Activated CD4-positive, alpha-beta memory T cell treated with anti-CD3 and anti-CD28 coated beads for 36 hours (primary cell): ENCODE measurements at regions of chr21 and their contacts with region 1.

Region 1: DNA sequence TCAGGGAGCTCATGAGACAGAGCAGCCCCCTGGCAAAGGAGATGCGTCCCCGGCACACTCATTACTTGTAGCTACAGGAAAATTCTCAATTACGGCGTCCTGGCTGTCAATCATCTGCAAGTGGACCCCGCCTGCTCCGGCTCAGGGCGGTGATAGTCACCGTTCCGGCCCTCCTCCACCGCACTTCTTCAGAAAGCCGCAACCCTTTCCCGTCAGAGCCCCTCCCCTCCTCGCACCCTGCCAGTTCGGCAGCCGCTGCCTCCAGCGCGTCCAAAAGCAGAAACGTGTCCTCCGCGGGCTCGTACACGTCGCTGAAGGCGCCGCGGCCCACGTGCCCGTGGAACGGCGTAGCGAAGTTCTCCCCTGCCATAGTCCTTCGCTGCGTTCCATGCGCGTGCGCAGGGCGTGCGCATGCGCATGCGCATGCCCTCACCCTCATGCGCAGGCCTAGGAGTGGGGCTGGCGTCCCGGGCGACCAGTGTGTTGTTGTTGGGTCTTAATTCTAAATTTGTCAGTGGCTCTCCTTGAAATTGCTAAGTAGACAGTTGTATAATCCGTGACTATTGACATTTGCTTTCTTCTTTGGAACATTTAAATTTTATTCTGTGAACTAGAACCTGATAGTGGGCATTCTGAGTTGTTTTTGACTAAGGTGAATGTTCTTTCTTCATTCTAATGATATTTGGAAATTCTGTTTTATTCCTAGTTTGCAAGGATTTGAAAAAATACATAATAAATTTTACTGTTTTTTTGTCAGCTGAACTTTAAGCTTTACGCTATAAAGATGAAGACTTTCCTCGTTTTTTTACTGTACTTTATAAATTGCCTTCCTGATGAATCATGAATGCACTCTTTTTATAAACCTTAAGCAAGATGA is 107.5 kb downstream of the LTN1 start:
- DNase-seq: peak; percentile 95
- H3K4me3 Mint-ChIP-seq: peak overlapping the region; percentile 89
- H3K27ac Mint-ChIP-seq: peak overlapping the region; percentile 99
- H3K4me1 Mint-ChIP-seq: peaks cover 14% of the 10 kb centered on the region
- H3K27me3 Mint-ChIP-seq: peaks cover 4% of the 10 kb centered on the region

Region 2: DNA sequence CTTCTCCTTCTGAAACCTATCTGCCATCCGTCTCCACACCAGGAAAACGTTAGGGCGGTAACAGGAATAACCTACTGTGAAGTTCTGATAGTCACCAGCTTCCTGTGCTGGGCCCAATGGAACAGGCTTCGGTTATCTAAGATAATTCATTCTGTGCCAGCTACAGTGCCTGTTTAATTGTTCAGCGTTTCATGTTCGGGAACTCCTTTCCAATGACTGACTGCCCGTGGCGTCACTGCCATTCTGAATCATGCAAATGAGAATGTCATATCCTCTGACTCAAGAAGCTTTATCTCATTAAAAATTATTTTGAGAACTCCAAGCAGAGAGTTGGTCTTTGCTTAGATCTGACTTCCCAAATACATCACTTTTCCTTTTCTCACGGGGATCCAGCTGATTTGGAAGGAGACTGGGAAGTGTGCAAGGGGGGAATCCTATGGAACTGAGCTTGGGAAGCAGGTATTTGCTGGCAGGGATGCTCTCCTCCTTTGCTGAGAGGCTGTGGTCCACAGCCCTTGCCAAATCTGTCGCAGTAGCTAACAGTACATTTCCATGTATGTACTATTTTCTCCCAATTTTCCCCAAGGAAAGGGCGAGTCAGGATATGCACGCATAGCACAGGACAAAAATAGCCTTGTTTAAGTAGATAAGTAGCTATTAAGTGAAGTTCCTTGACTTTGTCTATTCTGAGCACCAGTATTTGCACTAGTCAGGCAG is 251.2 kb before region 1 on chr21:
- CTCF ChIA-PET with region 1: no interaction called
- POLR2A ChIA-PET with region 1: no interaction called
- intact Hi-C with region 1: loop called (anchors 2 kb)
- DNase-seq: peak; percentile 33
- H3K4me3 Mint-ChIP-seq: no peak overlapping the region
- H3K27ac Mint-ChIP-seq: no peak overlapping the region
- H3K4me1 Mint-ChIP-seq: peaks cover 20% of the 10 kb centered on the region
- H3K27me3 Mint-ChIP-seq: no peaks in the 10 kb centered on the region

Region 3: GRCh38 chr21:28832013-28832714 is 53.0 kb before region 1 on chr21:
- CTCF ChIA-PET with region 1: interaction called, 3 read pairs
- POLR2A ChIA-PET with region 1: no interaction called
- intact Hi-C with region 1: loop called (anchors 1 kb)
- DNase-seq: no peak
- H3K4me3 Mint-ChIP-seq: no peak overlapping the region
- H3K27ac Mint-ChIP-seq: peak overlapping the region; percentile 63
- H3K4me1 Mint-ChIP-seq: peaks cover 57% of the 10 kb centered on the region
- H3K27me3 Mint-ChIP-seq: no peaks in the 10 kb centered on the region

Region 4: GRCh38 chr21:28943631-28944030 is 58.4 kb after region 1 on chr21:
- CTCF ChIA-PET with region 1: no interaction called
- POLR2A ChIA-PET with region 1: no interaction called
- intact Hi-C with region 1: loop called (anchors 2 kb)
- DNase-seq: no peak
- H3K4me3 Mint-ChIP-seq: no peak overlapping the region
- H3K27ac Mint-ChIP-seq: peak overlapping the region; percentile 28
- H3K4me1 Mint-ChIP-seq: peaks cover 7% of the 10 kb centered on the region
- H3K27me3 Mint-ChIP-seq: no peaks in the 10 kb centered on the region

Region 5: GRCh38 chr21:28975397-28975796 is 90.2 kb after region 1 on chr21:
- CTCF ChIA-PET with region 1: no interaction called
- POLR2A ChIA-PET with region 1: no interaction called
- intact Hi-C with region 1: no loop called
- DNase-seq: no peak
- H3K4me3 Mint-ChIP-seq: no peak overlapping the region
- H3K27ac Mint-ChIP-seq: no peak overlapping the region
- H3K4me1 Mint-ChIP-seq: peaks cover 10% of the 10 kb centered on the region
- H3K27me3 Mint-ChIP-seq: no peaks in the 10 kb centered on the region

Region 6: DNA sequence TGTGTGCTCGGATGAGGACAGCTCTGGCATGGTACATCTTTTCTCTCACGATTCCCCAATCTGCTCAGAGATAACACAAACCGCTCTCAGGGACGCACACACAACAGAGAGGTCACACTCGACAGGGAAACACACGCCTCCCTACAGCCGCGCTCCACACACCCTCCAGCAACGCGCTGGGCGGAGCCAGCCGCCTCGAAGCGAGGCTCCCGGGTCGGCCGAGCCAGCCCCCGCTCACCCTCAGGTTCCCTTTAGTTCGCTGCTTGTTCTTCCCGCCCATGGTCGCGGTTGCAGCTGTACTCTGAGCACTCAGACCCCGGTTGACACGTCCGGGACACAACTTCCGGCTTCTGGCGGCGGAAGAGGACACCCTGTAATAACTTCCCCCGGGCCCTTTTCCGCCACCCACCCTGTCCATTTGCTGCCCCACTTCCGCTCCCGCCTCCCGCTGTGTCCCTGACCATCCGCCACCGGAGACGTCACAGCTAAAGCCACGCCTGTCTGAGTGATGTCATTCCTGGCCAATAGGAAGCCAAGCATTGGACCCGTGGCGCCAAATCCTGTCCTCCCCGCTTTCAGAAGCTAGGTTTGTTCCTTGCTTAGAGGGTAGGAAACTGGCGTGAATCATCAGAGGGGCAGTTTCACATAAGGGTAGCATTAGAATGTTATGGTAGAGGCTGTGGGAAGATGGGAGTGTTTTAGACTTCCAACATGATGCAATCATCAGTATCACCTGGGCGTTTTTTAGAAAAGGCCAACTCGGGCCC is 107.5 kb after region 1 on chr21 and contains the start of gene LTN1:
- CTCF ChIA-PET with region 1: no interaction called
- POLR2A ChIA-PET with region 1: no interaction called
- intact Hi-C with region 1: loop called (anchors 1 kb)
- DNase-seq: peak; percentile 100
- H3K4me3 Mint-ChIP-seq: peak within 1 kb of the TSS; percentile 93
- H3K27ac Mint-ChIP-seq: peak within 1 kb of the TSS; percentile 95
- H3K4me1 Mint-ChIP-seq: peaks cover 48% of the 10 kb centered on the region
- H3K27me3 Mint-ChIP-seq: no peaks in the 10 kb centered on the region
- total RNA-seq, gene LTN1: 26.7 to 29.1 TPM

Region 7: DNA sequence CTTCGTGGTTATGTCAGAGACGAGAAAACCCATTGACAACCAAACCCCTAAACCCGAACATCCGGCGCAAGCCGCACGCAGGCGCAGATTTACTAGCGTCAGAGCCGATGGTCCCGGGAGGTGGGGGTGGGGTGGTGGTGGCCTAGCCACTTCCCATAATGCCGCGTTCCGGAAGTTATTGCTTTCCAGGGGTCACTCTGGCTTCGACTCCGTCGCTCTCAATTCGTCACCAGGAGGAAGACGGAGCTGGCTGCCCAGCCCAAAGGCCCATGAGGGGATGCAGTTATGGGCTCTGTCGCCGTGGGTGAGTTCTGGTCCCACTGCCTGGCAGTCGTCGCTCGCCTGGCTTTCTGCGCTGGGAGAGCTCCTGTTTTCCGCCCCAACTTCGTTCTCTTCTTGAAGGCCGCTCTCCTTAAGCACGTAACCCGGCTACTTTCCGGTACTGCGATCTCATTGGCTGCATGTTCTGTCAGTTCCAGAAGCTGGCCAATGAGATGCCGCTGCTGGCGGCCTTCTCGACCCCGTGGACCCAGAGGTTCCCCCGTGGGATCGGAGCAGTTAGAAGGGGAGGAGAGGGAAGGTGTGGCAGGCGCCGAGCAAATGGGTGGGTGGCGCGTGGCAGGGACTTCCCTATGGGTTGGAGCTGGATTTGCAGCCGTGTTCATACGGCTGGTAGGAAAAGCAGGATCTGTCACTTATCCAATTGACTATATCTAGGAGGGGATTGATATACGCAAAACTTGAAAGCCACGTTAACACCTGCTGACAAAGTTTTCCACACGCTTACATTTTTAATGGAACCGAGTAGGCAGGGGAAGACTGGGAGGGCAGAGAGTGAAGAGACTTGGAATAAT is 139.5 kb after region 1 on chr21 and contains the start of gene USP16:
- CTCF ChIA-PET with region 1: no interaction called
- POLR2A ChIA-PET with region 1: interaction called, 3 read pairs
- intact Hi-C with region 1: loop called (anchors 1 kb)
- DNase-seq: peak; percentile 96
- H3K4me3 Mint-ChIP-seq: peak within 1 kb of the TSS; percentile 100
- H3K27ac Mint-ChIP-seq: peak within 1 kb of the TSS; percentile 100
- H3K4me1 Mint-ChIP-seq: peaks cover 50% of the 10 kb centered on the region
- H3K27me3 Mint-ChIP-seq: no peaks in the 10 kb centered on the region
- total RNA-seq, gene USP16: 39.3 to 42.1 TPM

Region 8: DNA sequence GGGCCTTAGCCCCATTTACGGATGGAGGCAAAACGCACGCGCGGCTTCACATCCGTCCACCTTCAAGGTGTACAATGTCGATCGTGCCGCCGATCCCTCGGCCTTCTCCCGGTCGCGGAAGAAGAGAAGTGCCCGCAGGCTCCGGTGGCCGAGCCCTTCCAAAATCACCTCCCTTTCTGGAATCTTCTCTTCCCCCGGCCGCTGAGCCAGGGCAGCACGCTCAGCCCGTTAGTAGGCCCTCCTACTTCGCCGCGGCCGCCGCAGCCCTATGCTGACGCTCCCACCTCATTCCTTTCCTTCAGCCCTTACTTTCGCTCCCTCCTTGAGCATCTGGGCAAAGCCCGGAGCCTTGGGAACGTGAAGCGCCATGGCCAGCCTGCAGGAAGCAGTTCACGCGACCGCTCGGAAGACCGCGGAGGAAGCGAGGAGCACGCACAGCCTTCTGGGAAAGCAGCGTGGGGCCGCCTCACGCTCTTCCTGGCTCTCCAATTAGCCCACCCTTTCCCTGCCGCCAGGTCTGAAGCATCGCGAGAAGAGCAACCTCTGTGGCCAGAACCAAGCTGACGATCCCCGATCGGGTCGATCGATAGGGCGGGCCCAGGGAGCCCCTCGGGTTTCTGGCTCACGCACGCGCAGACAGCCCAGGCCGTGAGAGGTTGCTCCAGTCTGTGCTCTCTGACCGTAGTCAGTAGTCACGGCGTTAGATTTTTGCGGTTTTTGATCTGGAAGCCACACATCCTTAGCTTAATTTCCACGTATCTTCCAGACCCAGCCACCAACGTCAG is 188.2 kb after region 1 on chr21 and contains the start of gene CCT8:
- CTCF ChIA-PET with region 1: no interaction called
- POLR2A ChIA-PET with region 1: interaction called, 3 read pairs
- intact Hi-C with region 1: loop called (anchors 1 kb)
- DNase-seq: peak; percentile 99
- H3K4me3 Mint-ChIP-seq: peak within 1 kb of the TSS; percentile 96
- H3K27ac Mint-ChIP-seq: peak within 1 kb of the TSS; percentile 97
- H3K4me1 Mint-ChIP-seq: peaks cover 51% of the 10 kb centered on the region
- H3K27me3 Mint-ChIP-seq: no peaks in the 10 kb centered on the region
- total RNA-seq, gene CCT8: 431 to 435 TPM

Region 9: DNA sequence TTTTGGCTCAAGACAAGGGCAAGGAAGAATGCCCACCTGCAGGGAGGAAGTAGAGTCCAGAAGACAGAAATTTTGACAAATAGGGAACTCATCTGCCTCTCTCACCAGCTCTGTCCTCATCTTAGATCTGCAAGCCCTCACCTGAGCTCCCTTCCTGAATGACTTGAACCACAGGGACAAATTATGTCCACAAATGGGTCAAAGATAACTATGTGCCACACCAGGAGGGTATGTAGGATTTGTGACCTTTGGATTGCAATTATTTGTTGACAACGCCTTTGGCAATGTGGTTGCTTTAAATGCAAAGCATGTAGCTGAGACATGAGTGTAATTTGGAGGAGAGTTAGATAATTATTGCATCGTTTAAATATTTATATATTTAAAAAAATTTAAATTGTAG is 975.1 kb after region 1 on chr21:
- CTCF ChIA-PET with region 1: no interaction called
- POLR2A ChIA-PET with region 1: no interaction called
- intact Hi-C with region 1: no loop called
- DNase-seq: no peak
- H3K4me3 Mint-ChIP-seq: no peak overlapping the region
- H3K27ac Mint-ChIP-seq: no peak overlapping the region
- H3K4me1 Mint-ChIP-seq: no peaks in the 10 kb centered on the region
- H3K27me3 Mint-ChIP-seq: peaks cover 2% of the 10 kb centered on the region